K562 (cell line): ENCODE measurements at regions of chr3 and their contacts with region 1.

Region 1: DNA sequence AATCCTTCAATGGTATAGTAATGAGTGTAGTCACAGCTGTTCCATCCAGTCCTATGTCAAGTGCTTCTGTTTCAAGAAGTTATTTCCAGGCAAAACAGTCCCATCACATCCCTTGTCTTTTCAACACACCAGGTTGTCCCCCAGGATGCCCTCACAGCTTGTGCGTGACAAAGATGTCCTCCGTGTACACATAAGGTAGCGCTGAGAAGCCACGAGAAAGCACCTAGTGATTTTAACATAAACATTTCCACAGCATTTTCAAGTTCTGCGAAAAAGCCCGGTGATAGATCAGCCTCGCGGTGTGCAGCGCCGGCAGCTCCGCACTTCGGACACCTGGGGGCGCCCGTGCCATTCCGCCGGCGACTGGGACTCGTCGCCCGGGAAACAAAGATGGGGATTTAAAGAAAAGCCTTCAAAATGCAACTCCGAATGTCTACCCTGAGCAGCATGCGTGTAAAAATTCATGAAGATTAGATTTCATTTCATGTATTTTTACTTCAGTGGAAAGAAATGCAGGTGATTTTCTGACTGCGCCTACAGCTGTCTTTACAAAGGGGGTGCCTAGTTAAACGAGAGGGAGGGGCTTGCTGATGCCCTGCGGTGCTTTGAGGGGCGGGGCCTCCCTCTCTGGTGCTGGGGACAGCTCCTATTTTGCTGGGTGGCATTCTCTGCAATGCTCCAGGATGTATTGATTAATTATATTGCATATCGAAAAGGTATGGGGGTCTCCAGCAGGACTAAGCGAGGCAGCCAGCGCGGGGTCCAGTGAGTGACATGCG is 49.9 kb downstream of the KY start:
- DNase-seq: peak; percentile 58 to 74 (median 72)
- ATAC-seq: peak; percentile 93
- H3K4me3 ChIP-seq: no peak overlapping the region
- H3K27ac ChIP-seq: no peak overlapping the region
- H3K4me1 ChIP-seq: no peaks in the 10 kb centered on the region
- H3K27me3 ChIP-seq: peaks cover 0 to 16% of the 10 kb centered on the region in 2 experiments; a peak in 1 of 5 replicates
- CTCF ChIP-seq: peak; percentile 77 to 87 (median 81)
- EP300 ChIP-seq: no peak
- POLR2A ChIP-seq: no peak
- RAD21 ChIP-seq: peak; percentile 76 to 82

Region 2: GRCh38 chr3:134677196-134677986 is 76.5 kb after region 1 on chr3:
- CTCF ChIA-PET with region 1: interaction called, 6 read pairs
- POLR2A ChIA-PET with region 1: no interaction called
- in situ Hi-C with region 1: no loop called
- intact Hi-C with region 1: loop called (anchors 1 kb)
- DNase-seq: peak; percentile 43 to 67 (median 61)
- ATAC-seq: peak; percentile 98
- H3K4me3 ChIP-seq: no peak overlapping the region
- H3K27ac ChIP-seq: no peak overlapping the region
- H3K4me1 ChIP-seq: no peaks in the 10 kb centered on the region
- H3K27me3 ChIP-seq: peaks cover 0 to 3% of the 10 kb centered on the region in 2 experiments; a peak in 1 of 5 replicates
- CTCF ChIP-seq: peak; percentile 71 to 79 (median 76)
- EP300 ChIP-seq: no peak
- POLR2A ChIP-seq: no peak
- RAD21 ChIP-seq: peak; percentile 26 to 49; a peak in 3 of 4 replicates

Region 3: GRCh38 chr3:134685929-134686802 is 85.3 kb after region 1 on chr3:
- CTCF ChIA-PET with region 1: no interaction called
- POLR2A ChIA-PET with region 1: no interaction called
- in situ Hi-C with region 1: loop called (anchors 5 kb)
- intact Hi-C with region 1: no loop called
- DNase-seq: no peak
- ATAC-seq: no peak
- H3K4me3 ChIP-seq: no peak overlapping the region
- H3K27ac ChIP-seq: no peak overlapping the region
- H3K4me1 ChIP-seq: no peaks in the 10 kb centered on the region
- H3K27me3 ChIP-seq: peaks cover 0 to 2% of the 10 kb centered on the region in 2 experiments; a peak in 1 of 5 replicates
- CTCF ChIP-seq: no peak
- EP300 ChIP-seq: no peak
- POLR2A ChIP-seq: no peak
- RAD21 ChIP-seq: no peak

Region 4: DNA sequence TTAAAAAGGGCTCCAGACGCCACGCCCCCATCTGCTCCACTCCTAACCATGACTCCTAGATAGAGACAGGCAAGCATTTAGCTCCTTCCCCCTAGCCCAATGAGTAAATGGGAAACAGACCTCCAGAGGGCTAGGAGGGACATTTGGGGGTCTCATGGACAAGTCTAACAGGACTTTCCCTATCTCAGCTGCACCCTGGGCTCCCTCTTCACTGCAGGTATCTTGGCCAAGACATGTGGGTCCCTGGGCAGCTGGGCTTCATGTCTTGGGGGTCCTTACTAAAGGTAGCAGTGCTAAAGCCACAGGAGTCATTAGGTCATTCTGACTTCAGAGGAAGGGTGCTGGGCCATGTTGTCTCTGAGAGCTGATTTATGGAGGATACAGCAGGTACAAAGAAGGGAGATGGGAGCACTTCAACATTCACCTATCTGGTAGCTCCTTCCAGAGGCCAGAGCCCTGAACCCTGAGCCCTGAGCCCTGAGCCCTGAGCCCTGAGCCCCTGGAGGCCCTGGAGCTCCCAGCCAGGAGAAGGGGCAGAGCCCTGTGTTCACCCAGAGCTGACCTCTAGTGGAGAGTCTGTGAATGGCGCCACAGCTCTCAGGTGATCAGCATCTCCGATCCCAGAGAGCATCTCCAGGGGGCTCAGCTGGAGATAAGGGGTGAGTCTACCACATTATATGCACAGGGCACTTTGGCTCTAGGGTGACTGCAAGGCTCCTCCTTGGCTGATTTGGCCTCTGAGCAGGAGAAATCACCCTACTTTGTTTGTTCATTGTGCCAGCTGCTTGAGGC is 154.1 kb after region 1 on chr3:
- CTCF ChIA-PET with region 1: interaction called, 4 read pairs
- POLR2A ChIA-PET with region 1: no interaction called
- in situ Hi-C with region 1: no loop called
- intact Hi-C with region 1: loop called (anchors 5 kb)
- DNase-seq: peak; percentile 39 to 58 (median 49)
- ATAC-seq: peak; percentile 91
- H3K4me3 ChIP-seq: no peak overlapping the region
- H3K27ac ChIP-seq: no peak overlapping the region
- H3K4me1 ChIP-seq: no peaks in the 10 kb centered on the region
- H3K27me3 ChIP-seq: no peaks in the 10 kb centered on the region
- CTCF ChIP-seq: peak; percentile 53 to 64 (median 59)
- EP300 ChIP-seq: no peak
- POLR2A ChIP-seq: no peak
- RAD21 ChIP-seq: peak in 1 of 2 experiments; percentile 19; a peak in 2 of 4 replicates

Region 5: DNA sequence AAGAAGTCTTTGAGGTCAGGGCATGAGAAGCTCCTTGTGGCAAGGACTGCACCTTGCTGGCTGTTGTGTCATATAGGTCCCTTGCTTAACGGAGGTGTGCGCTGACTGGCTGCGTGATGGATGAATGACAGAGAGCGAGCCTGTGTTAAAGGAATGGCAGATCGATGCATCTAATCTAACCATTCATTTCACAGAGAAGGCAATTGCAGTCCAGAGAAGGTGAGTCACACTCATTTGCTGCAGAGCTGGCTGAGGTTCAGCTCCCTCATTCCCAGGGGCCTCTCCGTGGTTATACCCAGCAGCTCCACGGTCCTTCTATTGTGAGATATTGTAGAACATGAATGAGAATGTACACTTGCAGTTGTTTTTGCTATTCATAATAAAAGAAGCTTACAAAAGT is 483.5 kb after region 1 on chr3:
- CTCF ChIA-PET with region 1: no interaction called
- POLR2A ChIA-PET with region 1: no interaction called
- in situ Hi-C with region 1: no loop called
- intact Hi-C with region 1: loop called (anchors 10 kb)
- DNase-seq: no peak
- ATAC-seq: no peak
- H3K4me3 ChIP-seq: no peak overlapping the region
- H3K27ac ChIP-seq: no peak overlapping the region
- H3K4me1 ChIP-seq: no peaks in the 10 kb centered on the region
- H3K27me3 ChIP-seq: no peaks in the 10 kb centered on the region
- CTCF ChIP-seq: no peak
- EP300 ChIP-seq: no peak
- POLR2A ChIP-seq: no peak
- RAD21 ChIP-seq: no peak

Region 6: DNA sequence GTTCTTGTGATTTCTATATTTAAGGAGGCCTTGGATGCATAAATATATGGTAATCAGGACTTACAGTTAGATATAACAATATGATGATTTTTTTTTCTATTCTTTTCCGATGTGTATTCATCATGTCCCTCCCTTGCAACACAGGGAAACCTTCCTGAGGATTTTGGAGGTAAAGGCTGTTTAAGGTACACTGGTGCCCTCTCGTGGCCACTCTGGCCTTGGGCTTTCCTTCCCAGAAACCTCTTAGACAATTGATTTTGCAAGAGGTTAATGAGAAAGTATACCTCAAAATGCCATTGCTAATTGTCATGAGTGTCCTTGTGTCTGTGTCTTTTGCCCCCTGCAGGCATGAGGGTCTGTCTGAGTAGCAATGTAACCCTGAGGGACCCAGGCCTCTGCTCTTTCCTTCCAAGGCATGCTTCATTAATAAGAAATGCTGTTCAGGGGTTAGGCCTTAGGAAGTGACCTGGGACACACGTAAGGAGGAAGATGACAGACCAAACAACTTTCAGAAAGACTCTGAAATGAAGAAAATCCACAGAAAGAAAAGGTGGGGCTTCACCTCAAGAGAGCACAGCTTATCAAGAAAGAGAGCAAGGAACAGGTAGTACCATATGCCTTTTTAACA is 1294.3 kb after region 1 on chr3:
- CTCF ChIA-PET with region 1: interaction called, 5 read pairs
- POLR2A ChIA-PET with region 1: no interaction called
- in situ Hi-C with region 1: no loop called
- intact Hi-C with region 1: loop called (anchors 10 kb)
- DNase-seq: peak; percentile 29 to 65 (median 44)
- ATAC-seq: peak; percentile 72
- H3K4me3 ChIP-seq: no peak overlapping the region
- H3K27ac ChIP-seq: no peak overlapping the region
- H3K4me1 ChIP-seq: no peaks in the 10 kb centered on the region
- H3K27me3 ChIP-seq: no peaks in the 10 kb centered on the region
- CTCF ChIP-seq: peak; percentile 52 to 76 (median 74)
- EP300 ChIP-seq: no peak
- POLR2A ChIP-seq: no peak
- RAD21 ChIP-seq: peak; percentile 55 to 79